Activated CD4-positive, alpha-beta T cell treated with anti-CD3 and anti-CD28 coated beads, Interleukin-2, amount 10 ng/mL, durations not matched to agents 24 days and 14 days (primary cell): ENCODE measurements at regions of chr20 and their contacts with region 1.

Region 1: DNA sequence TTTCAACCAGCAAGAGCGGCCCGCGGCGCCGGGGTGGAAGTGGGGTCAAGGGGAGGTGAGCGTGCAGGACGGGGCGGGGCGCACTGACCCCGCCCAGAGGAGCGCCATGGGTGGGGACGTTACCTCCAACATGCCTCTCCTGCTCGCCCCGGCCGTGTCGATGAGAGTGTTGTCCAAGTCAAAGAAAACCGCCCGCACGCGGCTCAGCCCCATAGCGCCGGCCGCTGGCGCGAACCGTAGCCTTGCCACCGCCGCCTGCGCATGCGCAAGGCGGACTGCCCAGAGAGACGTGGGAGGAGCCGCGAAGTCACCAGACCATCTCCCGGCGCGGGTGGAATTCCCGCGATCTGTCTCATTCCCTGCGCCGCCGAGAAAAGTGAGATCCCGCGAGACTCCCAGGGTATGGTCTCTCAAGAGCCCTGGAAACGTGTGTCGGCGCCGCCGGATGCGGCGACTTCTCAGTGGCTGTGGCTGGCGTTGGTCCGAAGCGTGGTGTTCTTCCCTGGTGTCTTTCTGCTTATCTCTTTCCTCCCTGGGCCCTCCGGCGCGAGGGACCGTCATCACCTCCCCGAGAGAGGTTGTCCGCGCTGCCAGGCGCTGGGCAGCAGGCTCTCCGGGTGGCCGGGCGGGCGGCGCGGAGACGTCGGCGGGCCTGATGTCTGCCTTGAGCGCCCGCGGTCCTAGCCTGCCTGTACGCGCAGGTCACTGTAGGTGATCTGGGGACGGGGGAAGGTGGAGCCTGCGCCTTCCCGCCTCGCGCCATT is at the start of gene NANP:
- DNase-seq: peak; percentile 96
- H3K4me3 Mint-ChIP-seq: peak within 1 kb of the TSS; percentile 85
- H3K27ac Mint-ChIP-seq: peak within 1 kb of the TSS; percentile 98
- H3K4me1 Mint-ChIP-seq: peaks cover 30% of the 10 kb centered on the region
- H3K27me3 Mint-ChIP-seq: no peaks in the 10 kb centered on the region
- total RNA-seq, gene NANP: 10.0 TPM in 2 replicates

Region 2: GRCh38 chr20:24619212-24619611 is 1004.7 kb before region 1 on chr20:
- intact Hi-C with region 1: no loop called
- DNase-seq: no peak
- H3K4me3 Mint-ChIP-seq: no peak overlapping the region
- H3K27ac Mint-ChIP-seq: no peak overlapping the region
- H3K4me1 Mint-ChIP-seq: no peaks in the 10 kb centered on the region
- H3K27me3 Mint-ChIP-seq: peaks cover 10% of the 10 kb centered on the region

Region 3: DNA sequence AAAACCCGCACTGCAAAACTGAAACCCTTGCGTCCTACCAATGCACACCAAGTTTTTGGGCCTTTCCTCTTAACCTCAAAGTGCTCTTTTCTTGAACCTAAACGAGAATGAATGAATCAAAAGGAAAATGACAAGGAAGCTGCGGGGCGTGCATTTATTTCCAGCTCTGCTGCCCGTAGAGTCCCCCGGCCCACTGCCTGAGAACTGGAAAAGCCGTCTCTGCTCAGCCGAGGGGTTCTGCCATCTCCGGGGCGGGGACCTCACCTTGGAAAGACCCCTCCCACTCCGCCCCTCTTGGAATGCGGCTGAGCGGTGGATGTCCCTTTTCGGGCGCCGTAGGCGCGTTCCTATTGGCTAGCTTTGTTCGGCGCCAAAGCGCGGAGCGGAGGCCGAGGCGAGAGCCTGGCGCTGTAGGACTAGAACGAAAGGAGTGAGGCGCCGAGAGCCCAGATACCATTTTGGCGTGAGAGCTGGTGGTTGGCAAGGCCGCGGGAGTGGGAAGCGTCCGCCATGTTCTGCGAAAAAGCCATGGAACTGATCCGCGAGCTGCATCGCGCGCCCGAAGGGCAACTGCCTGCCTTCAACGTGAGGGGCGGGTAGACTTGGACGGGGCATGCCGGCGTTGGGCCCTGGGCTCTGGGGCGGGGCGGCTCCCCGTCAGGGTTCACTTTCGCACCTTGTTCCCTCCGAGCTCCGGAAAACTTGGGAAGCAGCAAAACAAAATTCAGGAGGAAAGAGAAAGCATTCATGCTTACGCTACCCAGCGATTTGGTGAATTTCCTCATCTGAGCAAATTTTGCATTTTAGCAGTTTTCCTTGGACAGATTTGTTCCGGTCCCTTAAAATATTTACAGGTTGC is 216.4 kb before region 1 on chr20 and contains the start of gene GINS1:
- intact Hi-C with region 1: loop called (anchors 5 kb)
- DNase-seq: peak; percentile 96
- H3K4me3 Mint-ChIP-seq: peak within 1 kb of the TSS; percentile 90
- H3K27ac Mint-ChIP-seq: peak within 1 kb of the TSS; percentile 95
- H3K4me1 Mint-ChIP-seq: peaks cover 19% of the 10 kb centered on the region
- H3K27me3 Mint-ChIP-seq: no peaks in the 10 kb centered on the region
- total RNA-seq, gene GINS1: 43.0 and 43.2 TPM in 2 replicates

Region 4: DNA sequence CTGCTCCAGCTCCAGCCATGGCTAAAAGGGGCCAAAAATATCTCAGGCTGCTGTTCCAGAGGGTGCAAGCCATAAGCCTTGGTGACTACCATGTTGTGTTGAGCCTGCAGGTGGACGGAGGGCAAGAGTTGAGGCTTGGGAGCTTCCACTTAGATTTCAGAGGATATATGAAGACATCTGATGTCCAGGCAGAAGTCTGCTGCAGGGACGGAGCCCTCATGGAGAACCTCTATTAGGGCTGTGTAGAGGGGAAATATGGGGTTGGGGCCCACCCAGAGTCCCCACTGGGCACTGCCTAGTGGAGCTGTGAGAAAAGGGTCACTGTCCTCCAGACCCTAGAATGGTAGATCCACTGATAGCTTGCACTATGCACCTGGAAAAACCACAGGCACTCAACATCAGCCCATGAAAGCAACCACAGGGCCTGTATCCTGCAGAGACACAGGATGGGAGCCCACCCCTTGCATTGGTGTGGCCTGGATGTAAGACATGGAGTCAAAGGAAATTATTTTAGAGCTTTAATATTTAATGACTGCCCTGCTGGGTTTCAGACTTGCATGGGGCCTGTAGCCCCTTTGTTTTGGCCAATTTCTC is 109.1 kb before region 1 on chr20:
- intact Hi-C with region 1: no loop called
- DNase-seq: no peak
- H3K4me3 Mint-ChIP-seq: no peak overlapping the region
- H3K27ac Mint-ChIP-seq: no peak overlapping the region
- H3K4me1 Mint-ChIP-seq: no peaks in the 10 kb centered on the region
- H3K27me3 Mint-ChIP-seq: no peaks in the 10 kb centered on the region

Region 5: GRCh38 chr20:25584905-25585704 is 38.8 kb before region 1 on chr20 and contains the start of gene NINL:
- intact Hi-C with region 1: loop called (anchors 1 kb)
- DNase-seq: peak; percentile 87
- H3K4me3 Mint-ChIP-seq: peak within 1 kb of the TSS; percentile 78
- H3K27ac Mint-ChIP-seq: peak within 1 kb of the TSS; percentile 76
- H3K4me1 Mint-ChIP-seq: peaks cover 12% of the 10 kb centered on the region
- H3K27me3 Mint-ChIP-seq: peaks cover 13% of the 10 kb centered on the region
- total RNA-seq, gene NINL: 3.0 and 3.5 TPM in 2 replicates

Region 6: GRCh38 chr20:25600632-25601031 is 23.3 kb before region 1 on chr20:
- intact Hi-C with region 1: loop called (anchors 1 kb)
- DNase-seq: no peak
- H3K4me3 Mint-ChIP-seq: no peak overlapping the region
- H3K27ac Mint-ChIP-seq: no peak overlapping the region
- H3K4me1 Mint-ChIP-seq: peaks cover 5% of the 10 kb centered on the region
- H3K27me3 Mint-ChIP-seq: peaks cover 4% of the 10 kb centered on the region

Region 7: GRCh38 chr20:25696384-25697131 is 72.6 kb after region 1 on chr20 and contains the start of gene ZNF337:
- intact Hi-C with region 1: loop called (anchors 1 kb)
- DNase-seq: peak; percentile 98
- H3K4me3 Mint-ChIP-seq: peak within 1 kb of the TSS; percentile 95
- H3K27ac Mint-ChIP-seq: peak within 1 kb of the TSS; percentile 94
- H3K4me1 Mint-ChIP-seq: peaks cover 22% of the 10 kb centered on the region
- H3K27me3 Mint-ChIP-seq: peaks cover 4% of the 10 kb centered on the region
- total RNA-seq, gene ZNF337: 15.7 and 16.1 TPM in 2 replicates

Region 8: DNA sequence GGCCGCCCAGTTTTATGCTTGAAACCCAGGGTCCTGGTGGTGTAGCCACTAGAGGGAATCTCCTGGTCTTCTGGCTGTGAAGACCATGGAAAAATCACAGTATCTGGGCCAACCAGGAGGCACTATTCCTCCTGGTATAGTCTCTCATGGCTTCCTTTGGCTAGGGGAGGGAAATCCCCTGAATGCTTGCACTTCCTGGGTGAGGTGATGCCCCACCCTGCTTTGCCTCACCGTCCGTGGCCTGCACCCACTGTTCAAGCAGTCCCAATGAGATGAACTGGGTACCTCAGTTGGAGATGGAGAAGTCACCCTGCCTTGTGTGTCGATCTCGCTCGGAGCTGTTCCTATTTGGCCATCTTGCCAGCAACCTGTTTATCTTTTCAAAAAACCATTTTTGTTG is 82.9 kb after region 1 on chr20:
- intact Hi-C with region 1: no loop called
- DNase-seq: peak; percentile 80
- H3K4me3 Mint-ChIP-seq: peak overlapping the region; percentile 33
- H3K27ac Mint-ChIP-seq: peak overlapping the region; percentile 39
- H3K4me1 Mint-ChIP-seq: peaks cover 25% of the 10 kb centered on the region
- H3K27me3 Mint-ChIP-seq: peaks cover 11% of the 10 kb centered on the region